T-cell (primary cell): ENCODE measurements at regions of chr3 and their contacts with region 1.

Region 1: GRCh38 chr3:136512381-136512780 is 239.8 kb downstream of the STAG1 start:
- DNase-seq: no peak
- ATAC-seq: no peak
- H3K4me3 ChIP-seq: no peak overlapping the region
- H3K4me3 Mint-ChIP-seq: no peak overlapping the region
- H3K27ac ChIP-seq: no peak overlapping the region
- H3K27ac Mint-ChIP-seq: no peak overlapping the region
- H3K4me1 ChIP-seq: no peaks in the 10 kb centered on the region
- H3K4me1 Mint-ChIP-seq: peaks cover 0 to 4% (median 0%) of the 10 kb centered on the region in 3 donors
- H3K27me3 ChIP-seq: no peaks in the 10 kb centered on the region
- H3K27me3 Mint-ChIP-seq: no peaks in the 10 kb centered on the region

Region 2: DNA sequence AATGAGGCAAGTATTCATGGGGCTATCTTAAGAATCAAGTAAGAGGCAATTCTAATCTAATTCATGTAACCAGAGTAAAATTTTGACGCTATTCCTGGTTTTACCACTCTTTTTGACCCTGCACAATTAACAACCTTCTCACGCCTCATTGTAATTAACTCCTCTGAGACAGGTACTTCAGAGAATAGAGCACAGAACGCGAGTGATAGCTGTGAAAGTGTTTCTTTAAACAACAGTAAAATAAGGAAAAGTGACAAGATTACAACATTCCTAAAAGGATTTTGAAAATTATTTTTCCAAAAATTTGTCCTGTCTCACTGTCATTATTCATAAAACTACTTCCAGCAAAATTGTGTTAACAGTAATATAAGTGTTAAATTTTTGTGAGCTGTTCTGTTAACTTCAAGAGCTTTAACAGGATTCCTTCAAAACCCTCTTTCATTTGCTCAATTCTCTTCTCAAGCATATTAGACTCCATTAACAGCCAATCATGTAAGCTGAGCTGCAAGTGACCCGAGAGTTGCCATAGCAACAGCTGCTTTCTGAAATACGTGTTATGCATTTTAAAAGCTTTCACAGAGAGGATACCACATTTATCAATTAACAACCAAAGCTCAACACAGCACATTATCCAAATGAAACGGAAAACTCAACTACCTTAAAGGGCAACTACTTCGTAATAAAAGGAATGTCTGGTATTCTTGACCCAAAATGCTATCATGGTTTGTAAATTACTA is 146.7 kb after region 1 on chr3:
- CTCF ChIA-PET with region 1: no interaction called
- POLR2A ChIA-PET with region 1: no interaction called
- DNase-seq: peak in 2 of 35 experiments; percentile 2 to 11
- ATAC-seq: no peak
- H3K4me3 ChIP-seq: no peak overlapping the region
- H3K4me3 Mint-ChIP-seq: no peak overlapping the region
- H3K27ac ChIP-seq: no peak overlapping the region
- H3K27ac Mint-ChIP-seq: no peak overlapping the region
- H3K4me1 ChIP-seq: no peaks in the 10 kb centered on the region
- H3K4me1 Mint-ChIP-seq: peaks cover 43 to 45% (median 43%) of the 10 kb centered on the region in 3 donors
- H3K27me3 ChIP-seq: no peaks in the 10 kb centered on the region
- H3K27me3 Mint-ChIP-seq: no peaks in the 10 kb centered on the region

Region 3: GRCh38 chr3:136838641-136839555 is 326.5 kb after region 1 on chr3:
- CTCF ChIA-PET with region 1: no interaction called
- POLR2A ChIA-PET with region 1: interaction called in 1 of 2 experiments, 11 read pairs
- DNase-seq: no peak
- ATAC-seq: no peak
- H3K4me3 ChIP-seq: no peak overlapping the region
- H3K4me3 Mint-ChIP-seq: no peak overlapping the region
- H3K27ac ChIP-seq: no peak overlapping the region
- H3K27ac Mint-ChIP-seq: no peak overlapping the region
- H3K4me1 ChIP-seq: no peaks in the 10 kb centered on the region
- H3K4me1 Mint-ChIP-seq: peaks cover 6 to 11% (median 7%) of the 10 kb centered on the region in 3 donors
- H3K27me3 ChIP-seq: no peaks in the 10 kb centered on the region
- H3K27me3 Mint-ChIP-seq: no peaks in the 10 kb centered on the region